Gastrocnemius medialis (tissue), 4 donors: ENCODE measurements at regions of chr10 and their contacts with region 1.

Region 1: GRCh38 chr10:61903221-61903927 is 1.9 kb downstream of the ARID5B start:
- DNase-seq: peak; percentile 13 to 34
- ATAC-seq: peak; percentile 44 to 56
- H3K4me3 ChIP-seq: peak overlapping the region; percentile 76 to 91 (median 89)
- H3K27ac ChIP-seq: peak overlapping the region; percentile 90 to 97 (median 94)
- H3K4me1 ChIP-seq: peaks cover 27 to 37% of the 10 kb centered on the region in 2 donors
- H3K27me3 ChIP-seq: no peaks in the 10 kb centered on the region
- CTCF ChIP-seq: peak in 3 of 5 experiments; percentile 13 to 38 (median 31)
- POLR2A ChIP-seq: peak; percentile 49 to 63

Region 2: GRCh38 chr10:61974601-61975390 is 71.4 kb after region 1 on chr10:
- in situ Hi-C with region 1: no loop called
- intact Hi-C with region 1: loop called (anchors 5 kb)
- DNase-seq: peak in 1 of 2 donors; percentile 31
- ATAC-seq: peak in 1 of 2 donors; percentile 37
- H3K4me3 ChIP-seq: peak overlapping the region in 1 of 4 donors; percentile 12
- H3K27ac ChIP-seq: peak overlapping the region; percentile 21 to 59 (median 42)
- H3K4me1 ChIP-seq: peaks cover 29 to 46% of the 10 kb centered on the region in 2 donors
- H3K27me3 ChIP-seq: no peaks in the 10 kb centered on the region
- CTCF ChIP-seq: no peak
- POLR2A ChIP-seq: no peak

Region 3: GRCh38 chr10:62025901-62026879 is 122.8 kb after region 1 on chr10:
- in situ Hi-C with region 1: loop called in 1 of 4 experiments (anchors 10 kb)
- intact Hi-C with region 1: no loop called
- DNase-seq: no peak
- ATAC-seq: no peak
- H3K4me3 ChIP-seq: no peak overlapping the region
- H3K27ac ChIP-seq: no peak overlapping the region
- H3K4me1 ChIP-seq: peaks cover 0 to 3% of the 10 kb centered on the region in 2 donors
- H3K27me3 ChIP-seq: no peaks in the 10 kb centered on the region
- CTCF ChIP-seq: no peak
- POLR2A ChIP-seq: no peak

Region 4: DNA sequence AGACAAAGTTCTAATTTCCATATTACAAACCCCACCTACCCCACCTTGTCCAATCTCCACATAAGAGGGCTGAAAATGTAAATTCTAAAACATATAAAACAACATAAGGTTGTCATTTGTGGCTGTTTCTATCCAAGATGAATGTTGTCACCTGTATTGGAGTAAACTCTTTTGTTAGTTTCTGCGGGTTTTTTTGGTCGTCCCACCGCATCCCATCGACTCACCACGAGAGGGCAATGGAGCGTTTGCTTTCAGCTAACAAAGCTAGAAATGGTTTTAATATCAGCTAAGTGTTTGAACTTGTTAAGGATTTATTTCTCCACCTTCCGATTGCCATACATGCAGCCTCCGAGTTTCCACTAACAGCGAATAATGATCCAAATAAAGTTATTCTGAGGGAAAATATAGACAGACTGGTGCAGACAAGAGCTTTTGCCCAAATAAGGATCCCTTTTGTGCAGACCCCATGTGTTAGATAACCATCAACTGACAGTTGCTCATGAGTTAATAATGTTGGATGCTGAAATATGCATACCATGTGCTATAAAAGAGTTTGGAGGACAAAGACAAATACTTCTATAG is 135.3 kb after region 1 on chr10:
- in situ Hi-C with region 1: loop called in 1 of 4 experiments (anchors 5 kb)
- intact Hi-C with region 1: loop called (anchors 2 kb)
- DNase-seq: peak; percentile 48 to 65
- ATAC-seq: peak; percentile 73 to 85
- H3K4me3 ChIP-seq: peak overlapping the region in 3 of 4 donors; percentile 4 to 43 (median 27)
- H3K27ac ChIP-seq: peak overlapping the region in 2 of 4 donors; percentile 1 to 50
- H3K4me1 ChIP-seq: peaks cover 21 to 39% of the 10 kb centered on the region in 2 donors
- H3K27me3 ChIP-seq: no peaks in the 10 kb centered on the region
- CTCF ChIP-seq: peak; percentile 80 to 92 (median 89)
- POLR2A ChIP-seq: no peak

Region 5: GRCh38 chr10:62095181-62096071 is 192.1 kb after region 1 on chr10:
- in situ Hi-C with region 1: no loop called
- intact Hi-C with region 1: loop called (anchors 5 kb)
- DNase-seq: no peak
- ATAC-seq: no peak
- H3K4me3 ChIP-seq: no peak overlapping the region
- H3K27ac ChIP-seq: peak overlapping the region; percentile 55 to 91 (median 74)
- H3K4me1 ChIP-seq: peaks cover 34 to 63% of the 10 kb centered on the region in 2 donors
- H3K27me3 ChIP-seq: no peaks in the 10 kb centered on the region
- CTCF ChIP-seq: no peak
- POLR2A ChIP-seq: no peak

Region 6: DNA sequence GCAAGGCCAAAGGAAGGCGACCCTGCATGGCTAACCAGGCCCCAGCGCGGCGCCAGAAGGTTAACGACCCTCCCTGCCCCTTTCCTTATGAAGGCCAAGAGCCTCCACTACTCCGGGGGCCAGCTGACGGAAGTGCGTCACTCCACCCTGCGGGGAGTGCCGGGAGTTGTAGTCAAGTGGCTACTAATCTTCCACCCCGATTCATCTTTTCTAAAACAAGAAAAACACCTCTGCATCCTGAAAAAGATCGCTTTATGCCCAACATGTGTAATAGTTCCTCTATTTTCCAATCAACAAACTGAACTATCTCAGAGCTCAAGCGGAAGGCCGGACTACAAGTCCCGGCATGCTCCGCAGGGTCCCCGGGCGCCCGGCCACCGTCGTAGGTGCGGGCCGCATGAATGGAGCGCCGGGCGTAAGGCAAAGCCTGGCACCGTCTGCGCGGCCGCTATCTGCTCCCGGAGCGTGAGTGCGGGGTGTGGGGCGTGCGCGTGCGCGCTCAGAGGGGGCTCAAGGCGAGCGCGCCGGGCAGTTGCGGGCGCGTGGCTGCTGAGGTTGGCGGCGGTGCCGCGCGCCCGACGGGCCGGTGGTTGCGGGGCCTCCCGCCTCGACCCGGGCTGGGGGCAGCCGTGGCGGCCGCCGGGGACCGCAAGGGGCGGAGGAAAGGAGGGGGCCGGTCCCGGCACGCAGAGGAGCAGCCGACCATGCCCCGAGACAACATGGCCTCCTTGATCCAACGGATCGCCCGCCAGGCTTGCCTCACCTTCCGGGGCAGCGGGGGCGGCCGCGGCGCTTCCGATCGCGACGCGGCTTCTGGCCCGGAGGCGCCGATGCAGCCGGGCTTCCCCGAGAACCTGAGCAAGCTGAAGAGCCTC is 901.2 kb after region 1 on chr10 and contains the start of gene ADO:
- in situ Hi-C with region 1: no loop called
- intact Hi-C with region 1: loop called (anchors 10 kb)
- DNase-seq: peak; percentile 75 to 88
- ATAC-seq: peak; percentile 93
- H3K4me3 ChIP-seq: peak within 1 kb of the TSS; percentile 69 to 86 (median 78)
- H3K27ac ChIP-seq: peak within 1 kb of the TSS; percentile 86 to 98 (median 95)
- H3K4me1 ChIP-seq: peaks cover 31 to 39% of the 10 kb centered on the region in 2 donors
- H3K27me3 ChIP-seq: peaks cover 0 to 3% (median 0%) of the 10 kb centered on the region in 3 donors
- CTCF ChIP-seq: no peak
- POLR2A ChIP-seq: peak; percentile 72 to 82
- total RNA-seq, gene ADO: 11.6 to 31.6 (median 27.1) TPM